ENCODE measurements at regions of chr10 and their contacts with region 1.

Region 1: GRCh38 chr10:102225646-102226541 is at the start of gene ELOVL3:
- DNase-seq: peak; percentile 53
- ATAC-seq: peak; percentile 86
- H3K4me3 ChIP-seq: peak within 1 kb of the TSS; percentile 54; the same call in 1 of the 2 replicates
- H3K27ac ChIP-seq: no peak within 1 kb of the TSS
- H3K4me1 ChIP-seq: peaks cover 11% of the 10 kb centered on the region
- H3K27me3 ChIP-seq: peaks cover 5 to 7% of the 10 kb centered on the region in 2 experiments
- CTCF ChIP-seq: no peak
- EP300 ChIP-seq: no peak
- POLR2A ChIP-seq: no peak
- RAD21 ChIP-seq: no peak
- polyA plus RNA-seq, gene ELOVL3: not detected

Region 2: DNA sequence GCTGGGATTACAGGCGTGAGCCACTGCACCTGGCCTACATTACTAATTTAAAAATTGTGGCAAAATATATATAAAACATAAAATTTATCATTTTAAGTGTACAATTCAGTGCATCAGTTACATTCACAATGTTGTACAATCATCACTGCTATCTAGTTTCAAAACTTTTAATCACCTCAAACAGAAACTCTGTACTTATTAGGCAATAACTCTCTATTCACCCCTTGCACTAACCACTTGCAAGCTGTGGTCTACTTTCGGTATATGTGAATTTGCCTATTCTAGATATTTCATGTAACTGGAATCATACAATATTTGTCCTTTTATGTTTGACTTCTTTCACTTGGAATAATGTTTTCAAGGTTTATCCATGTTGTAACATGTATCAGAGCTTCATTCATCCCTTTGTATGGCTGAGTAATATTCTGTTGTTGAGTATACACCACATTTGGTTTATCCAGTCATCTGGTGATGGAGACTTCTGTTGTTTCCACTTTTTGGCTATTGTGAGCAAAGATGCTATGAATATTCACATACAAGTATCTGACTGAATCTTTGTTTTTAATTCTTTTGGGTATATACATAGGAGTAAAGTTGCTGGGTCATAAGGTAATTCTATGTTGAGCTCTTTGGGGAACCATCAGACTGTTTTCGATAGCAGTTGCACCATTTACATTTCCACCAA is 14.1 kb before region 1 on chr10:
- CTCF ChIA-PET with region 1: interaction called, 14 read pairs
- POLR2A ChIA-PET with region 1: no interaction called
- RAD21 ChIA-PET with region 1: interaction called, 5 read pairs
- SMC1A ChIA-PET with region 1: no interaction called
- in situ Hi-C with region 1: no loop called
- intact Hi-C with region 1: no loop called
- DNase-seq: no peak
- ATAC-seq: peak; percentile 92
- H3K4me3 ChIP-seq: no peak overlapping the region
- H3K27ac ChIP-seq: no peak overlapping the region
- H3K4me1 ChIP-seq: no peaks in the 10 kb centered on the region; the same call in 1 of the 2 replicates
- H3K27me3 ChIP-seq: no peaks in the 10 kb centered on the region
- CTCF ChIP-seq: no peak
- EP300 ChIP-seq: no peak
- POLR2A ChIP-seq: no peak
- RAD21 ChIP-seq: no peak

Region 3: GRCh38 chr10:102280397-102281101 is 54.7 kb after region 1 on chr10:
- CTCF ChIA-PET with region 1: interaction called, 23 read pairs
- POLR2A ChIA-PET with region 1: no interaction called
- RAD21 ChIA-PET with region 1: interaction called, 7 read pairs
- SMC1A ChIA-PET with region 1: no interaction called
- in situ Hi-C with region 1: no loop called
- intact Hi-C with region 1: no loop called
- DNase-seq: no peak
- ATAC-seq: peak; percentile 44
- H3K4me3 ChIP-seq: peak overlapping the region; percentile 14; the same call in 1 of the 2 replicates
- H3K27ac ChIP-seq: peak overlapping the region; percentile 44
- H3K4me1 ChIP-seq: peaks cover 6% of the 10 kb centered on the region; the same call in 1 of the 2 replicates
- H3K27me3 ChIP-seq: no peaks in the 10 kb centered on the region
- CTCF ChIP-seq: no peak
- EP300 ChIP-seq: no peak
- POLR2A ChIP-seq: no peak
- RAD21 ChIP-seq: no peak

Region 4: GRCh38 chr10:102352066-102352715 is 126.3 kb after region 1 on chr10:
- CTCF ChIA-PET with region 1: interaction called, 632 read pairs
- POLR2A ChIA-PET with region 1: interaction called, 4 read pairs
- RAD21 ChIA-PET with region 1: interaction called, 256 read pairs
- SMC1A ChIA-PET with region 1: interaction called, 231 read pairs
- in situ Hi-C with region 1: loop called (anchors 5 kb)
- intact Hi-C with region 1: loop called (anchors 1 kb)
- DNase-seq: no peak
- ATAC-seq: peak; percentile 92
- H3K4me3 ChIP-seq: no peak overlapping the region
- H3K27ac ChIP-seq: no peak overlapping the region
- H3K4me1 ChIP-seq: no peaks in the 10 kb centered on the region
- H3K27me3 ChIP-seq: no peaks in the 10 kb centered on the region
- CTCF ChIP-seq: peak; percentile 86 to 95 (median 93)
- EP300 ChIP-seq: no peak
- POLR2A ChIP-seq: no peak
- RAD21 ChIP-seq: peak; percentile 92

Region 5: DNA sequence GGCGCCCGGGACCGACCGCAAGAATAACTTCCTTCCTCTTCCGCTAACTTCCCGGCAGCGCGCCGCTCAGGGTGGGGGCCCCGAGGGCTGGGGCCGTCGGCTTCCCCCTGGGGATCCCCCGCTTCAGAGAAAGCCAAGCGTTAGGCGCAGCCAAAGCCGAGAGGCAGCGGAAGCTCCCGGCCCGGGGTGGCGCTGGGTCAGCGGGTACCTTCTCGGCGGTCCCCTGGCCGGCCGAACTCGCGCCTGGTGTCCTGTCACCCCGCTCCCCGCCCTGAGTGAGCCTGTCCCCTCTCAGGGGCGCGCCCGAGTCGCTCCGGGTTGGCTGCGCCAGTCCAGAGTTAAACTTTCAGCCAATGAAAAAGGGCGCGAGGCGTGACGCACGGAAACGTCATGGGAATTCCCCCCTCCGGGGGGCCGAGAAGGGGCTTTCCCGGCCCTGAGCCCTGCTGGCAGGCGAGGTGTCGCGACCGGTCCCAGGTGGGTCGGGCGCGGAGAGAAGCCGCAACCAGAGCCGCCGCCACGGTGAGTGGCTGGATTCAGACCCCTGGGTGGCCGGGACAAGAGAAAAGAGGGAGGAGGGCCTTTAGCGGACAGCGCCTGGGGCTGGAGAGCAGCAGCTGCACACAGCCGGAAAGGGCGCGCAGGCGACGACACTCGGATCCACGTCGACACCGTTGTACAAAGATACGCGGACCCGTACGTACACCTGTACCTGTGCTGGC is 168.3 kb after region 1 on chr10:
- CTCF ChIA-PET with region 1: interaction called, 69 read pairs
- POLR2A ChIA-PET with region 1: no interaction called
- RAD21 ChIA-PET with region 1: interaction called, 33 read pairs
- SMC1A ChIA-PET with region 1: interaction called, 15 read pairs
- in situ Hi-C with region 1: no loop called
- intact Hi-C with region 1: loop called (anchors 2 kb)
- DNase-seq: peak; percentile 89
- ATAC-seq: peak; percentile 87
- H3K4me3 ChIP-seq: peak overlapping the region; percentile 100
- H3K27ac ChIP-seq: peak overlapping the region; percentile 93
- H3K4me1 ChIP-seq: peaks cover 17% of the 10 kb centered on the region
- H3K27me3 ChIP-seq: no peaks in the 10 kb centered on the region
- CTCF ChIP-seq: peak in 2 of 3 experiments; percentile 89 to 91; a peak in 2 of 6 replicates
- EP300 ChIP-seq: peak; percentile 21 to 50; a peak in 2 of 4 replicates
- POLR2A ChIP-seq: peak; percentile 85
- RAD21 ChIP-seq: peak; percentile 54

Region 6: GRCh38 chr10:102420810-102421644 is 195.1 kb after region 1 on chr10 and contains the start of gene FBXL15:
- CTCF ChIA-PET with region 1: interaction called, 41 read pairs
- POLR2A ChIA-PET with region 1: interaction called, 3 read pairs
- RAD21 ChIA-PET with region 1: interaction called, 10 read pairs
- SMC1A ChIA-PET with region 1: interaction called, 4 read pairs
- in situ Hi-C with region 1: no loop called
- intact Hi-C with region 1: no loop called
- DNase-seq: peak; percentile 89
- ATAC-seq: peak; percentile 77
- H3K4me3 ChIP-seq: peak within 1 kb of the TSS; percentile 98
- H3K27ac ChIP-seq: peak within 1 kb of the TSS; percentile 85
- H3K4me1 ChIP-seq: peaks cover 18% of the 10 kb centered on the region
- H3K27me3 ChIP-seq: no peaks in the 10 kb centered on the region; a peak in 1 of 4 replicates
- CTCF ChIP-seq: no peak
- EP300 ChIP-seq: no peak
- POLR2A ChIP-seq: peak; percentile 79
- RAD21 ChIP-seq: no peak
- polyA plus RNA-seq, gene FBXL15: 0.13 to 0.66 TPM

Region 7: GRCh38 chr10:102583435-102584417 is 357.8 kb after region 1 on chr10:
- CTCF ChIA-PET with region 1: interaction called, 16 read pairs
- POLR2A ChIA-PET with region 1: no interaction called
- RAD21 ChIA-PET with region 1: interaction called, 23 read pairs
- SMC1A ChIA-PET with region 1: interaction called, 13 read pairs
- in situ Hi-C with region 1: no loop called
- intact Hi-C with region 1: loop called (anchors 5 kb)
- DNase-seq: peak; percentile 51
- ATAC-seq: peak; percentile 100
- H3K4me3 ChIP-seq: no peak overlapping the region
- H3K27ac ChIP-seq: no peak overlapping the region
- H3K4me1 ChIP-seq: no peaks in the 10 kb centered on the region
- H3K27me3 ChIP-seq: no peaks in the 10 kb centered on the region
- CTCF ChIP-seq: peak; percentile 86 to 96 (median 92)
- EP300 ChIP-seq: no peak
- POLR2A ChIP-seq: no peak
- RAD21 ChIP-seq: peak; percentile 92

Measured in GM12878 (cell line).